Colonic mucosa (tissue), 4 donors: ENCODE measurements at regions of chr5 and their contacts with region 1.

Region 1: GRCh38 chr5:113612060-113612496 is 98.6 kb downstream of the YTHDC2 start:
- DNase-seq: no peak
- H3K4me3 ChIP-seq: no peak overlapping the region
- H3K27ac ChIP-seq: no peak overlapping the region
- H3K4me1 ChIP-seq: no peaks in the 10 kb centered on the region
- H3K27me3 ChIP-seq: no peaks in the 10 kb centered on the region
- CTCF ChIP-seq: peak; percentile 47

Region 2: DNA sequence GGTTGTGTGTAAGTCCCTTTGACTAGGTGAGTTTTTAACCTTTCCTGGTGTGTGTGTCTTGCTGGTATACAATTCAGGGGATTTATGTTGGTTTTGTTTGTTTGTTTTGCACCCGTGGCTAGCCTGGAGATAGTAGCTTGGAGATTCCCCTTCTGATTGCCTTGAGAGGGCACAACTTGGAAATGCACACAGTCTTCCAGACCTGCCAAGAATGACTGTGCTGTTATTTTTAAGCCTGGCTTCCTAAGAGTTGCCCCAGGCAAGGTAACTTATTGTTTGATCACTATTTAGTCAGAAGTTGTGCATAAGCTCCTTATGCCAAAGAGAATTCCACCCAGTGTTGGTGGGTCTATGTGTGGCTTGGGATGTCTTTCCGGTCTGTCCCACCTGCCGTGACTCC is 327.9 kb after region 1 on chr5:
- intact Hi-C with region 1: no loop called
- DNase-seq: no peak
- H3K4me3 ChIP-seq: no peak overlapping the region
- H3K27ac ChIP-seq: no peak overlapping the region
- H3K4me1 ChIP-seq: no peaks in the 10 kb centered on the region
- H3K27me3 ChIP-seq: no peaks in the 10 kb centered on the region
- CTCF ChIP-seq: no peak

Region 3: GRCh38 chr5:115069087-115069968 is 1457.2 kb after region 1 on chr5:
- intact Hi-C with region 1: loop called (anchors 10 kb)
- DNase-seq: peak; percentile 19
- H3K4me3 ChIP-seq: no peak overlapping the region
- H3K27ac ChIP-seq: no peak overlapping the region
- H3K4me1 ChIP-seq: no peaks in the 10 kb centered on the region
- H3K27me3 ChIP-seq: no peaks in the 10 kb centered on the region
- CTCF ChIP-seq: peak; percentile 29